Psoas muscle (tissue), 8 donors: ENCODE measurements at regions of chr5 and their contacts with region 1.

Region 1: DNA sequence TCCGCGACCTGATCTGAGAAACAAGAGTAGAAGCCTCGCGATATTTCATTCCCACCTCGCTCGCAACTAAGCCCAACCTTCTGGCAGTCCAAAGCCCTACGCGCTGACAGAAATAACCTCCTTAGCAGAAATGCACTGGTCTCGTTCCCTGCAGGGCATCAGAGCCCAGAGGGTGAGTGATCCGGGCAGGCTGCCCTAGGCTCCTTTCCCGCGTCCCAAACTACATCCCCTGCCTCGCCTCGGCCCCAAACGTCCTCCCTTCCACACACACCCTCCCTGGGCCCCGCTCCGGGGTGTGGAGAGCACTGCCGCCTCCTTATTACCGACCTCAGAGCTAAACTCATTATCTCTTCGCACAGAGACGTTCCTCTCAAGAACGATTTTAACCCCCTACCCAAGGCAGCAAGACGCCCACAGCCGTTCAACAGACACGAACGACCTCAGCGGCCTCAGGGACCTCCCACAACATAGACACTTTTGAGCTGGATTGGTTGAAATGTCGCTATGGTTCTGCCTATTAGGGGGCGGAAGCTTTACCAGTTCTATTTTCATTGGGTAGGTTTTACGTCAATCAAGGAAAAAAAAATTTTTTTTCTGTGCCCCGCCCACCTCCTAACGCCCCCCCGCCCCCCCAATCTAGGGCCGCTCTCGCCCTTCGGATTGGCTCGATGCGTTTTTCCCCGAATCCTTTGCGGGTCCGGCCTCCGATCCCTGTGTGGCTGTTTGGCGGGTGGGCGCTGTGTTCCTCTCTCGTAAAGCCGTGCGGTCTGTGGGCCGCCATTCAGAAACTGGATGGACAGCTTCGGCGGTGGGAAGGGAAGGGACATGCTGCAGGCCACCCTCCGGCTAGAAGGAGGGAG is at the start of gene CETN3:
- DNase-seq: peak; percentile 91 to 96
- ATAC-seq: peak; percentile 96 to 97 (median 97)
- H3K4me3 ChIP-seq: peak within 1 kb of the TSS; percentile 90
- H3K27ac ChIP-seq: peak within 1 kb of the TSS; percentile 98
- H3K4me1 ChIP-seq: peaks cover 15% of the 10 kb centered on the region
- H3K27me3 ChIP-seq: no peaks in the 10 kb centered on the region
- CTCF ChIP-seq: no peak
- total RNA-seq, gene CETN3: 6.2 to 11.1 (median 9.8) TPM

Region 2: DNA sequence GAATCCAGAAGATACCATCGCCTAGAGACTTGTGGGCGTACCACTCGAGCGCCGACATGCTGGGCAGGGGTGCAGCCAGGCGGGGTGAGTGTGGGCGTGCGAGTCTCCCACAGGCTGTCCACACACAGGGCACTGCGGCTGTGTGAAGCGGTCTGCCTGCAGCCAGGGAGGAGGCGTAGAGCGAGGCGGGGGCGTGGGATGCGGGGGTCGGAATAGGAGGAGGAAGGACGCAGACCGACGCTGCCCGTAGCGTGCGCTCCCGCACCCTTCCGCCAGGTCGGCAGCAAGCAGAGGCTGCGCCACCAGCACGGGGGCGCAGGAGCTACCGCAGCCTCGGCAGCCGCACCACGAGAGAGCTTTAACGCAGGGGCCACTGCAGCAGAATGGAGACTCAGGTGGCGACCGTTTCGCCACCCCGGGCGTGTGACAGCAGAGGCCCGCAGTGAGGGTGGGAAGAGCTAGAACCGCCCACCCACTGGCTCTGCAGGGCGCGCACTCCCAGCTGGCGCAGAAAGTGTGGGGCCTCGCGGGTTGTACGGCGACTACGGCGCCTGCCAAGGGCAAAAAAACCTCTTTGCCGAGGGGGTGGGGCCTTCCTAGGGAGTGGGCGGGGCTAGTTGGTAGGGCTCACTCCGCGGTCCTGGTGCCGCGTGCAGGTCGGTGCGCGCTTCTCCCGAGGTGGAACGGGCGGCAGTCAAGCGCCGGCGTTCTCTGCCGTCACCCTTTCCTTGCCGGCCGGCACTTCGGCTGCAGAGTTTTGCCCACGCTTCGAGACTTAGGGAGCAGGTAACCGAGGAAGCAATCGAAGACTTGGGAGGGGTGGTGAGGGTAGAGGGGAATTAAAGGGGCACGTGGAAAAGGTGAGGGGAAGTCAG is 64.9 kb after region 1 on chr5 and contains the starts of genes MBLAC2 and POLR3G:
- intact Hi-C with region 1: loop called in 1 of 2 experiments (anchors 5 kb)
- DNase-seq: peak; percentile 92 to 97
- ATAC-seq: peak; percentile 96 to 98 (median 96)
- H3K4me3 ChIP-seq: peak within 1 kb of the TSS; percentile 86
- H3K27ac ChIP-seq: peak within 1 kb of the TSS; percentile 85
- H3K4me1 ChIP-seq: peaks cover 20% of the 10 kb centered on the region
- H3K27me3 ChIP-seq: no peaks in the 10 kb centered on the region
- CTCF ChIP-seq: peak; percentile 44
- total RNA-seq, gene MBLAC2: 2.2 to 2.9 (median 2.6) TPM
- total RNA-seq, gene POLR3G: 1.0 to 1.9 (median 1.7) TPM